Transverse colon (tissue), 4 donors: ENCODE measurements at regions of chr5 and their contacts with region 1.

Region 1: DNA sequence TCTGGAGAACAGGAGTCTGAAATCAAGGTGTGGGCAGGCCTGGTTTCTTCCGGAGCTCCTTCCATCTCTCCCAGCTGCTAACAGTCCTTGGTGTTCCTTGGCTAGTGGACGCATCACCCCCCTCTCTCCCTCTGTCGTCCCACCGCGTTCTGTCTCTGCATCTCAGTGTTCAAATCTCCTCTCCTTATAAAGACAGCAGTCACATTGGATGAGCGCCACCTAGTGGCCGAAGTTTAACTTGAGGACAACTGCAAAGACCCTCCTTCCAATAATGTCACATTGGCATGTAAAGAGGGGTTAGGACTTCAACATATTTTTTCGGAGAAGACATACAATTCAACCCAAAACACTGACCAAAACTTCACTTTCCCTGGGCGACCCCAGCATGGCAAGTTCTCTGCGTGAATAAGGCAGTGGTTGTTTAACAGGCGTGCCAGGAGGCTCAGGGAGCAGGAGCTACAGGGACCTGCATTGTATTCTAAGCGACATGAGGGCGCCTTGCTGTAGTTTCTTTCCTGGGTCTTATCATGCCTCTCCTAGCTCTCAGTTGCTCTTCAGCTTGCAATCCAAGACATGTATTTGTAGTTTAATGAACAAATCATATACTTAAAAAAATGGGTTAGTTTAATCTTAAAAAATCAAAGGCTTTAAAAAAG is 27.9 kb upstream of the BASP1 start:
- DNase-seq: peak; percentile 83
- H3K4me3 ChIP-seq: no peak overlapping the region
- H3K27ac ChIP-seq: peak overlapping the region in 3 of 4 donors; percentile 13 to 34 (median 22)
- H3K4me1 ChIP-seq: peaks cover 3 to 31% (median 13%) of the 10 kb centered on the region in 4 donors
- H3K27me3 ChIP-seq: no peaks in the 10 kb centered on the region
- CTCF ChIP-seq: peak; percentile 87 to 92 (median 88)
- EP300 ChIP-seq: no peak
- POLR2A ChIP-seq: no peak

Region 2: DNA sequence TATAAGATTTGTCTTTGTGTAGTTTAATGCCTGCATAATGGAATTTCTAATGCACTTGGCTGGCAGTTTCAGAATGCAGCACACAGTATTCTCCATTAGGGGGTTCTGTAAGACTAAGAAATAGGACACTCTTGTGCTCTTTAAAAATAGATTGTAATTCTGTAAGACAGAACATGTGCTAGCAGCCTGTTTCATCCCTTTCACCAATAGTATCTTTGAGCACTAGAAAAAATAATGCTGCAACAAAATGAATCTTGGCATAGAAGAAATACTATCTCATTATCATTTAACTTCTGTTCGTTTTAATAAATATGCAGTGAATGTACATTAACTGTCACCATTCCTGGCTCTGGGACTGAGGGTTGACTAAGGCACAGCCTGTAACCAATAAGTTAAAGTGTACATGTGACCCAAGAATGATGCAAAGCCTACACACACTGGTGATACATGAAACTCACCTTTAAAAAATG is 700.2 kb before region 1 on chr5:
- in situ Hi-C with region 1: loop called in 2 of 4 experiments (anchors 25 kb)
- intact Hi-C with region 1: no loop called
- DNase-seq: no peak
- H3K4me3 ChIP-seq: no peak overlapping the region
- H3K27ac ChIP-seq: no peak overlapping the region
- H3K4me1 ChIP-seq: peaks cover 5 to 80% (median 29%) of the 10 kb centered on the region in 4 donors
- H3K27me3 ChIP-seq: no peaks in the 10 kb centered on the region
- CTCF ChIP-seq: peak; percentile 50 to 73 (median 57)
- EP300 ChIP-seq: no peak
- POLR2A ChIP-seq: no peak

Region 3: GRCh38 chr5:16784843-16785791 is 404.4 kb before region 1 on chr5:
- in situ Hi-C with region 1: loop called in 3 of 4 experiments (anchors 5 to 10 kb)
- intact Hi-C with region 1: loop called (anchors 10 kb)
- DNase-seq: no peak
- H3K4me3 ChIP-seq: no peak overlapping the region
- H3K27ac ChIP-seq: no peak overlapping the region
- H3K4me1 ChIP-seq: no peaks in the 10 kb centered on the region
- H3K27me3 ChIP-seq: no peaks in the 10 kb centered on the region
- CTCF ChIP-seq: no peak
- EP300 ChIP-seq: no peak
- POLR2A ChIP-seq: no peak

Region 4: DNA sequence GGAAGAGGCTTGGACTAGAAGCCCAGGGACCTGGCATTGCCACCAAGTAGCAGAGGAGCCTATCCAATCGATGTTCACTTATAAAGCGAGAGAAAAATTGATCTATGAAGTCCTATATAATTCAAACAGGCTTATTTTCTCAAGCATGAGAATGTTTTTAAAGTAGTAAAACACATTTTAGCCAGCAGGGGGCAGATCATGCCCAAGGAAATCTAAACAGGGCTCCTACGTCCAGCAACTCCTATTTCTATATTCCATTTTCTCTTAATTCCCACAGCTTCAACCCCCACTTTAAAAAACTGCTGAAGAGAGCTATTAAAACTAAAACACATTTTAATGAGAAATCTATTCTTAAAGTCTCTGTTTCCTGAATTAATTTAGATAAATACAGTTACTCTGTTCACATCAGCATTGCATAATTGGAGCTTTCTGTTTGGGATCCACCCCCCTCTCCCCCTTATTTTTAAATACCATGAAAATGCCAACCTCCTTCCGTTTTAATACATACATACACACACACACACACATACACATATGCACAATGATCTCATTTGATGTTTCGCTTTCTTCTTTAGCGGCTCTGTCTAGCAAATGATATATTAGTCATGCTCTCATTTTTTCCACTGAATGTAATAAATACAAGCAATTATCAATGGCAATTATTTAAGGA is 398.3 kb before region 1 on chr5:
- in situ Hi-C with region 1: loop called in 3 of 4 experiments (anchors 5 to 10 kb)
- intact Hi-C with region 1: loop called (anchors 10 kb)
- DNase-seq: no peak
- H3K4me3 ChIP-seq: no peak overlapping the region
- H3K27ac ChIP-seq: no peak overlapping the region
- H3K4me1 ChIP-seq: peaks cover 0 to 4% (median 0%) of the 10 kb centered on the region in 4 donors
- H3K27me3 ChIP-seq: no peaks in the 10 kb centered on the region
- CTCF ChIP-seq: peak; percentile 69 to 77 (median 74)
- EP300 ChIP-seq: no peak
- POLR2A ChIP-seq: no peak

Region 5: DNA sequence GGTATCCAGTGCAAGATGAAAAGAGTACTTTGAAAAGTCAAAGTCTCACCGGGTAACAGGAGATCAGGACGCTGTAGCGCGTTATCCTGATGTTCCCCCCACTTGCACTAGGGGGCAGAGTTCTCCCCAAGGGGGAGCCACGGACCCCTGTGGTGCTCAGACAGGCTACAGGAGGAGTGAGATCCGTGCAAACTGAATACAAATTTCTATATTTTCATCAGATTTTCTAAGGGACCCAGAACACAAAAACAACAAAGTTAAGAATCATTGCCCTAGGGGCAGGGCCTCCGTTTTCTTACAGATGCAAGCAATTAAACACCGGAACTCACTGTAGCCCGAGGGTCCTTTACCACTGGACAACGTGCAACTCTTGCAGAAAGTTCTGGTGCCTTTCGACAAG is 255.4 kb before region 1 on chr5:
- in situ Hi-C with region 1: loop called in 2 of 4 experiments (anchors 25 kb)
- intact Hi-C with region 1: no loop called
- DNase-seq: peak; percentile 79
- H3K4me3 ChIP-seq: peak overlapping the region in 3 of 4 donors; percentile 77 to 88 (median 78)
- H3K27ac ChIP-seq: peak overlapping the region in 3 of 4 donors; percentile 89 to 92 (median 91)
- H3K4me1 ChIP-seq: peaks cover 0 to 49% (median 36%) of the 10 kb centered on the region in 4 donors
- H3K27me3 ChIP-seq: peaks cover 53% of the 10 kb centered on the region
- CTCF ChIP-seq: peak; percentile 74 to 87 (median 82)
- EP300 ChIP-seq: no peak
- POLR2A ChIP-seq: no peak

Region 6: DNA sequence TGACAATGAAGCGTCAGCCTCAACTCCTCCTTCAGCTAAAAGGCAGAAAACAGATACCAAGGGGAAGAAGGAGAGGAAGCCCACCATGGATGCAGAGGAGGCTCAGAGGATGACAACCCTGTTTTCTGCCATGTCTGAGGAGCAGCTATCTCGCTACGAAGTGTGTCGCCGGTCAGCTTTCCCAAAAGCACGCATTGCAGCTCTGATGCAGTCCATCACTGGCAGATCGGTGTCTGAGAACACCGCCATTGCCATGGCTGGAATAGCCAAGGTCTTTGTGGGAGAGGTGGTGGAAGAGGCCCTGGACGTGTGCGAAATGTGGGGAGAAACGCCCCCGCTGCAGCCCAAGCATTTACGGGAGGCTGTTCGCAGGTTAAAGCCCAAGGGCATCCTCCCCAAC is 415.4 kb after region 1 on chr5:
- in situ Hi-C with region 1: no loop called
- intact Hi-C with region 1: no loop called
- DNase-seq: no peak
- H3K4me3 ChIP-seq: no peak overlapping the region
- H3K27ac ChIP-seq: no peak overlapping the region
- H3K4me1 ChIP-seq: no peaks in the 10 kb centered on the region
- H3K27me3 ChIP-seq: no peaks in the 10 kb centered on the region
- CTCF ChIP-seq: no peak
- EP300 ChIP-seq: no peak
- POLR2A ChIP-seq: no peak